CD8-positive, alpha-beta T cell (primary cell): ENCODE measurements at regions of chr2 and their contacts with region 1.

Region 1: DNA sequence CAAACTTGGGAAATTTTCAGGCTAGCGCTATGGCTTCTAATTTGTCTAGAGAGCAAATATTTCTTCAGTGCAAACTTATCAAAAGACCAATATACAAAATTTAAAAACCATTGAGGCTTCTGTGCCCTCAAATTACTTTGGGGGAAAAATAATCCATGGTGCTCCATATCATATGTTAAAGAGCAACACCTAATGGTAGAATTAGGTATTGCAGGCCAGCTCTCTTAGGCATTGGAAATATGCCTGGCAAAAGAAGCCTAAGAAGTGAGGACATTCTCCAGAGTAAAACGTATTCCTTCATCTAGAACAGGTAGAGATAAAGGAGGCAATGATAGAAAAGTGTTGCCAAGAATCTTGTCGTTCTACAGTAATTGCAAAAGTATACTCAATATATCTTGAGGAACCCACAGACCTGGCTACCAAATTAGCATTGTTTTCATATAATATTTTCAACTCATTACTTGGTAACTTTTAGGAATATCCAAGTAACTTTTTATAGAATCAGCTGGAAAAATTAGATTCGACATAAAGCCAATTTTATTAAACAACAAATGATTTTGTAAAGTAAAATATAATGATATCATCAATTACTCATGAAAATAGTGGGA is 401.1 kb downstream of the BCL11A start:
- DNase-seq: peak in 3 of 9 experiments; percentile 20 to 50 (median 24)
- ATAC-seq: no peak
- H3K4me3 ChIP-seq: no peak overlapping the region
- H3K4me3 Mint-ChIP-seq: no peak overlapping the region
- H3K27ac ChIP-seq: no peak overlapping the region
- H3K27ac Mint-ChIP-seq: no peak overlapping the region
- H3K4me1 ChIP-seq: no peaks in the 10 kb centered on the region
- H3K4me1 Mint-ChIP-seq: peaks cover 11% of the 10 kb centered on the region
- H3K27me3 ChIP-seq: no peaks in the 10 kb centered on the region
- H3K27me3 Mint-ChIP-seq: no peaks in the 10 kb centered on the region
- CTCF ChIP-seq: peak; percentile 87

Region 2: GRCh38 chr2:58762176-58762781 is 1390.1 kb before region 1 on chr2:
- CTCF ChIA-PET with region 1: no interaction called
- POLR2A ChIA-PET with region 1: no interaction called
- intact Hi-C with region 1: loop called in 1 of 2 experiments (anchors 5 kb)
- DNase-seq: peak in 4 of 9 experiments; percentile 1 to 34 (median 12)
- ATAC-seq: no peak
- H3K4me3 ChIP-seq: no peak overlapping the region
- H3K4me3 Mint-ChIP-seq: no peak overlapping the region
- H3K27ac ChIP-seq: no peak overlapping the region
- H3K27ac Mint-ChIP-seq: no peak overlapping the region
- H3K4me1 ChIP-seq: no peaks in the 10 kb centered on the region
- H3K4me1 Mint-ChIP-seq: no peaks in the 10 kb centered on the region
- H3K27me3 ChIP-seq: no peaks in the 10 kb centered on the region
- H3K27me3 Mint-ChIP-seq: peaks cover 3% of the 10 kb centered on the region
- CTCF ChIP-seq: peak; percentile 41

Region 3: GRCh38 chr2:59025157-59025757 is 1127.1 kb before region 1 on chr2:
- CTCF ChIA-PET with region 1: no interaction called
- POLR2A ChIA-PET with region 1: no interaction called
- intact Hi-C with region 1: loop called (anchors 2 to 5 kb)
- DNase-seq: peak in 5 of 9 experiments; percentile 9 to 50 (median 13)
- ATAC-seq: no peak
- H3K4me3 ChIP-seq: no peak overlapping the region
- H3K4me3 Mint-ChIP-seq: no peak overlapping the region
- H3K27ac ChIP-seq: no peak overlapping the region
- H3K27ac Mint-ChIP-seq: no peak overlapping the region
- H3K4me1 ChIP-seq: no peaks in the 10 kb centered on the region
- H3K4me1 Mint-ChIP-seq: no peaks in the 10 kb centered on the region
- H3K27me3 ChIP-seq: no peaks in the 10 kb centered on the region
- H3K27me3 Mint-ChIP-seq: no peaks in the 10 kb centered on the region
- CTCF ChIP-seq: no peak

Region 4: DNA sequence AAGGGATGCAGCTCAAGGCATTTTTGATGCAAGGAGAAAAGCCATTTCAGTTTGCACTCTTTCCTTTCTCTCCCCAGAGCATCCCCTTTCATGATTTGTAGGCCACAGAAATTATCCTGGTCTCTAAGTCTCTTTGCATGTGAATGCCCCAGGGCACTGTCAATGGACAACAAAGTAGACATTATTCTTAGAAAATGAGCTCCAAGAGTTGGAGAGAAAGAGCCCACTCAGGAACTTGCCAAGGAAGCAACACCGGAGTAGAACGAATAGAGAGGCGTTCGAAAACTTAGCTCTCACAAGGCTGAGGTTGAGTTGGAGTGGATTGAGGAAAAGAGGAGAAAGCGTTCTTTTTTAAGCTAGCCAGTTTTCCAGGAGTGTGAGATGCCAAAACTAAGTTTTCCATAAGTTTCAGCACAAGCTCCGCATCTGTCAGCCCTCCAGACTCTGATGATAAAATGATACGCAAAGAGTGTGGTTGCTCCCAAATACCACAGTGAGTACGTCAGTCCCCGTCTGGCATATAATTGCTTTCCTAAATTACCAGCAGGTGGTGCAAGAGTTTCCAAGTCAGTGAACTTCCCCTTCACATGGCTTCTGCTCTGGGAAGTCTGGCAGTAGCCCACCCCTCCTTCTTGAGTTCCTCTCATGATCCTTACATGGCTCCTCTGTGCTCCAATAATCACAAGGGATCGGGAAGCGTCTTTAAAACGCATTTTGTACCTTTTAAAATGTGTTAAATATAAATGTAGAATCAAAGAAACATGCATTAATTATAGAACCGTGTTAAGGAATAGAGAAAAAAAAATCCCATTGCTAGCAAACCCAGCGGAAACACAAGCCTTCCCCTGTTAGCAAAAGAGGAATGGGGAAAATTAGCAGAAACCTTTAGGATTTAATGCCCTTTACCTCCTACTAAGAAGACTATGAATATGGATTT is 850.6 kb before region 1 on chr2:
- CTCF ChIA-PET with region 1: interaction called, 14 read pairs
- POLR2A ChIA-PET with region 1: no interaction called
- intact Hi-C with region 1: loop called in 1 of 2 experiments (anchors 2 kb)
- DNase-seq: peak in 3 of 9 experiments; percentile 6 to 61 (median 26)
- ATAC-seq: no peak
- H3K4me3 ChIP-seq: no peak overlapping the region
- H3K4me3 Mint-ChIP-seq: no peak overlapping the region
- H3K27ac ChIP-seq: no peak overlapping the region
- H3K27ac Mint-ChIP-seq: no peak overlapping the region
- H3K4me1 ChIP-seq: no peaks in the 10 kb centered on the region
- H3K4me1 Mint-ChIP-seq: no peaks in the 10 kb centered on the region
- H3K27me3 ChIP-seq: no peaks in the 10 kb centered on the region
- H3K27me3 Mint-ChIP-seq: no peaks in the 10 kb centered on the region
- CTCF ChIP-seq: peak; percentile 48

Region 5: GRCh38 chr2:59449269-59449668 is 703.1 kb before region 1 on chr2:
- CTCF ChIA-PET with region 1: no interaction called
- POLR2A ChIA-PET with region 1: no interaction called
- intact Hi-C with region 1: loop called in 1 of 2 experiments (anchors 10 kb)
- DNase-seq: peak in 2 of 9 experiments; percentile 2 to 27
- ATAC-seq: no peak
- H3K4me3 ChIP-seq: no peak overlapping the region
- H3K4me3 Mint-ChIP-seq: no peak overlapping the region
- H3K27ac ChIP-seq: no peak overlapping the region
- H3K27ac Mint-ChIP-seq: no peak overlapping the region
- H3K4me1 ChIP-seq: no peaks in the 10 kb centered on the region
- H3K4me1 Mint-ChIP-seq: no peaks in the 10 kb centered on the region
- H3K27me3 ChIP-seq: no peaks in the 10 kb centered on the region
- H3K27me3 Mint-ChIP-seq: no peaks in the 10 kb centered on the region
- CTCF ChIP-seq: no peak

Region 6: GRCh38 chr2:60047944-60048525 is 104.3 kb before region 1 on chr2:
- CTCF ChIA-PET with region 1: no interaction called
- POLR2A ChIA-PET with region 1: no interaction called
- intact Hi-C with region 1: no loop called
- DNase-seq: no peak
- ATAC-seq: no peak
- H3K4me3 ChIP-seq: no peak overlapping the region
- H3K4me3 Mint-ChIP-seq: no peak overlapping the region
- H3K27ac ChIP-seq: no peak overlapping the region
- H3K27ac Mint-ChIP-seq: no peak overlapping the region
- H3K4me1 ChIP-seq: no peaks in the 10 kb centered on the region
- H3K4me1 Mint-ChIP-seq: no peaks in the 10 kb centered on the region
- H3K27me3 ChIP-seq: no peaks in the 10 kb centered on the region
- H3K27me3 Mint-ChIP-seq: no peaks in the 10 kb centered on the region
- CTCF ChIP-seq: no peak